OCI-LY7 (cell line): ENCODE measurements at regions of chr6 and their contacts with region 1.

Region 1: GRCh38 chr6:18477301-18477941 is 90.3 kb downstream of the RNF144B start:
- DNase-seq: peak; percentile 70
- H3K4me3 ChIP-seq: no peak overlapping the region
- H3K27ac ChIP-seq: no peak overlapping the region
- H3K4me1 ChIP-seq: peaks cover 23% of the 10 kb centered on the region
- CTCF ChIP-seq: no peak

Region 2: GRCh38 chr6:18457065-18457812 is 20.2 kb before region 1 on chr6:
- CTCF ChIA-PET with region 1: no interaction called
- POLR2A ChIA-PET with region 1: no interaction called
- intact Hi-C with region 1: no loop called
- DNase-seq: no peak
- H3K4me3 ChIP-seq: no peak overlapping the region
- H3K27ac ChIP-seq: no peak overlapping the region
- H3K4me1 ChIP-seq: no peaks in the 10 kb centered on the region
- CTCF ChIP-seq: no peak

Region 3: GRCh38 chr6:18488526-18489270 is 11.3 kb after region 1 on chr6:
- CTCF ChIA-PET with region 1: no interaction called
- POLR2A ChIA-PET with region 1: interaction called, 11 read pairs
- intact Hi-C with region 1: no loop called
- DNase-seq: no peak
- H3K4me3 ChIP-seq: no peak overlapping the region
- H3K27ac ChIP-seq: no peak overlapping the region
- H3K4me1 ChIP-seq: no peaks in the 10 kb centered on the region
- CTCF ChIP-seq: no peak